Right cardiac atrium (tissue), 5 donors: ENCODE measurements at regions of chr18 and their contacts with region 1.

Region 1: DNA sequence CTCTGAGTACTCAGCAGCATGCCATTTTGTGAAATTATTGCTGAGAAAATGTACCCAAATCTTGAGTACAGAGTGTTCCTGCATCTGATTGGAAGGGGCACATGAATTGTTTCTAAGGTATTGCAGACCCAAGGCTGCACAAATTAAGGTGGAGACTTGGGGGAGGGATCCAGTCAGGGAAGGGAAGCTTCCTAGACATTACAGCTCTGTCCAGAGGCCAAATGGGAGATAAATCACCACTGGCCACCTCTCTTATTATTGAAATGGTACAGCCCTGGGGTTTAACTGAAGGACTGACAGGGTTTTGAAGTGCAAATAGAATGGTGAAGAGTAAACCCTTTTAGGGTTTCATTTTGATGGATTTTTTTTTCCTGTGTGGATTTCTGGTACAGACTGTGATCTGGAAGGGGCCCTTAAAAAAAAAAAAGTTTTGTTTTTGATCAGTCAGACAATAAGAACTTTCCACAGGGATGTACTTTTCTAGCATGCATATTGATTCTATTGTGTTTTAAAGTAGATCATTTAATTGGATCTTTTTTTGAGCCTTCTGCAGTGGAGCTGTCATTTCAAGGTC is 119.4 kb downstream of the GREB1L start:
- DNase-seq: no peak
- ATAC-seq: peak in 1 of 2 donors; percentile 31
- H3K4me3 ChIP-seq: no peak overlapping the region
- H3K27ac ChIP-seq: peak overlapping the region; percentile 50
- H3K4me1 ChIP-seq: no peaks in the 10 kb centered on the region
- H3K27me3 ChIP-seq: no peaks in the 10 kb centered on the region

Region 2: GRCh38 chr18:21303913-21304312 is 57.5 kb before region 1 on chr18:
- intact Hi-C with region 1: loop called in 1 of 4 experiments (anchors 10 kb)
- DNase-seq: no peak
- ATAC-seq: no peak
- H3K4me3 ChIP-seq: no peak overlapping the region
- H3K27ac ChIP-seq: no peak overlapping the region
- H3K4me1 ChIP-seq: no peaks in the 10 kb centered on the region
- H3K27me3 ChIP-seq: no peaks in the 10 kb centered on the region

Region 3: GRCh38 chr18:21513292-21513691 is 151.9 kb after region 1 on chr18:
- intact Hi-C with region 1: no loop called
- DNase-seq: no peak
- ATAC-seq: no peak
- H3K4me3 ChIP-seq: no peak overlapping the region
- H3K27ac ChIP-seq: no peak overlapping the region
- H3K4me1 ChIP-seq: no peaks in the 10 kb centered on the region
- H3K27me3 ChIP-seq: no peaks in the 10 kb centered on the region